Mammary epithelial cell (primary cell): ENCODE measurements at regions of chr1 and their contacts with region 1.

Region 1: GRCh38 chr1:64242895-64243756 is 39.7 kb downstream of the UBE2U start:
- DNase-seq: peak; percentile 31
- H3K4me3 ChIP-seq: no peak overlapping the region
- H3K27ac ChIP-seq: no peak overlapping the region
- H3K4me1 ChIP-seq: no peaks in the 10 kb centered on the region
- H3K27me3 ChIP-seq: no peaks in the 10 kb centered on the region
- CTCF ChIP-seq: peak; percentile 44 to 54

Region 2: DNA sequence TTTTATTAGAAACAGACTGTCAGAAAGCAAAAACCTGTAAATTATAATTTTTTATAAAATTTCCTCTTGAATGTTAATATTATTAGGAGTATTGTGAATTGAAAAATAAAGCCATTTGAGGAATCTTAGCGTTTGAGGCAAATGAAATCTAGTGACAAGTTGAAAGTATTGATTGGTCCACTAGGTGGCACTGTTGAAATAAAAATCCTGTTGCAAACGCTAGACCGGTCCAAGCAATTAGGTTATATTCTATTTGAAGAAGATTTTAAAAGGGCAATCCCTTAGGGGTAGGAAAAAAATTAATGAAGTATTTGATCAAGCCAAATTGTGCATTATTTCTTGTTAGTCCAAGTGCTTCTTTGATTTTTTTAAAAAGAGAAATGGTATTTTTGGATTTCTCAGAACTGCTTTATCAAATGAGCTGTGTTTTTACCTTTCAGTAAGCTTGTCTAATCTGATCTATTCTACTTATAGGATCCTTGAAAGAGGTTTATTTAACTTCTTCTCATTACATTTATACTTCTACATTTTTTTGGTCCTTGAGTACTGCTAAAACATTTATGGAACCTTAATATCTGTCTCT is 1401.4 kb before region 1 on chr1:
- CTCF ChIA-PET with region 1: no interaction called
- dilution Hi-C with region 1: no loop called
- in situ Hi-C with region 1: no loop called
- intact Hi-C with region 1: loop called (anchors 10 kb)
- DNase-seq: peak; percentile 35
- H3K4me3 ChIP-seq: no peak overlapping the region
- H3K27ac ChIP-seq: no peak overlapping the region
- H3K4me1 ChIP-seq: no peaks in the 10 kb centered on the region
- H3K27me3 ChIP-seq: no peaks in the 10 kb centered on the region
- CTCF ChIP-seq: peak; percentile 56 to 58

Region 3: GRCh38 chr1:63316984-63317816 is 925.9 kb before region 1 on chr1:
- CTCF ChIA-PET with region 1: no interaction called
- dilution Hi-C with region 1: no loop called
- in situ Hi-C with region 1: no loop called
- intact Hi-C with region 1: loop called (anchors 5 kb)
- DNase-seq: peak; percentile 68
- H3K4me3 ChIP-seq: peak overlapping the region; percentile 51 to 59 (median 52)
- H3K27ac ChIP-seq: no peak overlapping the region
- H3K4me1 ChIP-seq: peaks cover 5% of the 10 kb centered on the region
- H3K27me3 ChIP-seq: peaks cover 39% of the 10 kb centered on the region
- CTCF ChIP-seq: peak; percentile 53 to 84

Region 4: DNA sequence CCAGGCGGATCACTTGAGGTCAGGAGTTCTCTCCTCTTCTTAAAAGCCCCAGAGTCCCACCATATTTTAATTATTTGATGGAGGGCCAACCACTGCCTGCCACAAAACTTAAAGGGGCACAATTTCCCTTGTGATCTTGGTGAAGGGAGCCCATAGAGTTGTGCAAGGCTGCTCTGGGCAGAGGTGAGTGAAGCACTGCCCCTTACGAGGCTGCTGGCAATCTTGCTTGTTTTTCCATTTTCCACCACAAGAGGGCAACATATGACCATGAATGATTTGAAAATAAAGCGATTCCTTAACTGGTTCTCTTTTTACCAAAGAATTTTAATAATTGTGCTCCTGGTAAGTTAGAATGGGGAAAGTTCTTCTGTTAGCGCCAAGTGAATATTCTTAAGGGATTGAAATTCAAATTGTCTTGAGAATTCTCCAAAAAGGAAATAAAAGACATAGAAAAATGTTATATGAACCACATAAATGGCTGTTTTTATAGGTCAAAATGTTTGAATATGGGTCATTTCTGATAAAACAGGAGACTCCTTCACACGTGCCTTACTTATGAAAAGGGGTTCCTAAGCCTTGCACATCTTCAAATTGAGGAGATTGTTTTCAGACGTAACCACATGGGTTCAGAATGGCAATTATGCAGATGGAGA is 627.2 kb before region 1 on chr1:
- CTCF ChIA-PET with region 1: no interaction called
- dilution Hi-C with region 1: no loop called
- in situ Hi-C with region 1: loop called in 1 of 2 experiments (anchors 10 kb)
- intact Hi-C with region 1: loop called (anchors 1 kb)
- DNase-seq: peak; percentile 58
- H3K4me3 ChIP-seq: no peak overlapping the region
- H3K27ac ChIP-seq: no peak overlapping the region
- H3K4me1 ChIP-seq: peaks cover 4% of the 10 kb centered on the region
- H3K27me3 ChIP-seq: no peaks in the 10 kb centered on the region
- CTCF ChIP-seq: peak; percentile 60 to 75

Region 5: DNA sequence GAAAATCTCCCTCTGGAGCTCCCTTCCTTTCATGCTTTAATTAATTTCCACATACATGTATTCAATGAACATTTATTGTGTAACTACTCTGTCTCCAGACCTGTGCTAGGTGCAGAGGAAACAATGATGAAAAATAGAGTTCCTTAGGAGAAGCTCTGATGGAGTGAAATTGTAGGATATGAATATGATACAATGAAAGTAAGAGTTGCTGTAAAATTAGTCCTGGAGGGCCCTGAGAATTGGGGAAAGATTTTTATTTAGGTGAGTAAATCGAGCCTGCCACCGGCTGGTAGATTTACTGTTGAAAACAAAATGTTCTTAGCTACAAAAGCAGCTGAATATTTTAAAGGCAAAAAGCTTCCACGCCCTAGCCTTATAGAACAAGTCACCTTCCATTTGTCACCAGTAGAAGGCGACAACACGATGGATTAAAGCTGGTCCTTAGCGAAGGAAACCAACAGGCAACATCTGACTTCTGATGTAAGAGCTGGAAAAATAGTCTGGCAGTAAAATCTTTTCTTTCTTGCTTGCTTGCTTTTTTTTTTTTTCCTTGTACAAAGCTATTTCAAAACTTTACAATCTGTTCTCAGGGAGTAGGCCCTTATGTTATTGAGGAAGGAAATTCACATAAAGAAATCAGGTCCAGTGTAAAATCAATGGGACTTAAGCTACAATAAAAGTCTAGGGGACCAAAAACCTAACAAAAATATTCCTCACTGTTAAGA is 551.3 kb before region 1 on chr1:
- CTCF ChIA-PET with region 1: no interaction called
- dilution Hi-C with region 1: no loop called
- in situ Hi-C with region 1: loop called (anchors 5 to 10 kb)
- intact Hi-C with region 1: loop called (anchors 1 kb)
- DNase-seq: peak; percentile 68
- H3K4me3 ChIP-seq: no peak overlapping the region
- H3K27ac ChIP-seq: no peak overlapping the region
- H3K4me1 ChIP-seq: no peaks in the 10 kb centered on the region
- H3K27me3 ChIP-seq: no peaks in the 10 kb centered on the region
- CTCF ChIP-seq: peak; percentile 83 to 86

Region 6: GRCh38 chr1:63935143-63935542 is 308.0 kb before region 1 on chr1:
- CTCF ChIA-PET with region 1: interaction called, 4 read pairs
- dilution Hi-C with region 1: no loop called
- in situ Hi-C with region 1: loop called in 1 of 2 experiments (anchors 25 kb)
- intact Hi-C with region 1: loop called (anchors 5 kb)
- DNase-seq: peak; percentile 40
- H3K4me3 ChIP-seq: no peak overlapping the region
- H3K27ac ChIP-seq: no peak overlapping the region
- H3K4me1 ChIP-seq: no peaks in the 10 kb centered on the region
- H3K27me3 ChIP-seq: no peaks in the 10 kb centered on the region
- CTCF ChIP-seq: peak; percentile 36 to 81

Region 7: DNA sequence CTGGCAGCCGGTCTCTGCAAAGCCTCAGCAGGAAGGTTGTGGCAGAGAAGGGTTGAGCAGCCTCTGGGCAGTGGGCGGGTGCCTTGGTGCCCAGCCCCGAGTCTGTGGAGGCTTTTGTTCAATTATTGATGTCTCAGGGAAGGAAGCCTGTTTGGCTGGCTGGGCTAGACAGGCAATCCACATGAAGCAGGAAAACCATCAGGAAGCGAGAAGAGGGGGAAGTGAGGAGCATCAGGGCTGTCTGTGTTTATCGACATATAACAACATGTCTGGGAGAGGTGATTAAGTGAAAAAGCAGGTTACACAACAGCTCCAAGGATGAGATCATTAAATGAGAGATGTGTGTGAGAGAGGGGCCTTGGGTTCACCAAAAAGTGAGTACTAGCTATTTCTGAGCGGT is 65.7 kb after region 1 on chr1:
- CTCF ChIA-PET with region 1: no interaction called
- dilution Hi-C with region 1: no loop called
- in situ Hi-C with region 1: no loop called
- intact Hi-C with region 1: no loop called
- DNase-seq: peak; percentile 73
- H3K4me3 ChIP-seq: no peak overlapping the region
- H3K27ac ChIP-seq: no peak overlapping the region
- H3K4me1 ChIP-seq: peaks cover 5% of the 10 kb centered on the region
- H3K27me3 ChIP-seq: no peaks in the 10 kb centered on the region
- CTCF ChIP-seq: no peak

Region 8: GRCh38 chr1:64691626-64692025 is 448.5 kb after region 1 on chr1:
- CTCF ChIA-PET with region 1: no interaction called
- dilution Hi-C with region 1: no loop called
- in situ Hi-C with region 1: no loop called
- intact Hi-C with region 1: no loop called
- DNase-seq: peak; percentile 41
- H3K4me3 ChIP-seq: no peak overlapping the region
- H3K27ac ChIP-seq: peak overlapping the region; percentile 41
- H3K4me1 ChIP-seq: peaks cover 14% of the 10 kb centered on the region
- H3K27me3 ChIP-seq: no peaks in the 10 kb centered on the region
- CTCF ChIP-seq: no peak